Activated CD8-positive, alpha-beta T cell treated with anti-CD3 and anti-CD28 coated beads for 36 hours (primary cell): ENCODE measurements at regions of chr15 and their contacts with region 1.

Region 1: DNA sequence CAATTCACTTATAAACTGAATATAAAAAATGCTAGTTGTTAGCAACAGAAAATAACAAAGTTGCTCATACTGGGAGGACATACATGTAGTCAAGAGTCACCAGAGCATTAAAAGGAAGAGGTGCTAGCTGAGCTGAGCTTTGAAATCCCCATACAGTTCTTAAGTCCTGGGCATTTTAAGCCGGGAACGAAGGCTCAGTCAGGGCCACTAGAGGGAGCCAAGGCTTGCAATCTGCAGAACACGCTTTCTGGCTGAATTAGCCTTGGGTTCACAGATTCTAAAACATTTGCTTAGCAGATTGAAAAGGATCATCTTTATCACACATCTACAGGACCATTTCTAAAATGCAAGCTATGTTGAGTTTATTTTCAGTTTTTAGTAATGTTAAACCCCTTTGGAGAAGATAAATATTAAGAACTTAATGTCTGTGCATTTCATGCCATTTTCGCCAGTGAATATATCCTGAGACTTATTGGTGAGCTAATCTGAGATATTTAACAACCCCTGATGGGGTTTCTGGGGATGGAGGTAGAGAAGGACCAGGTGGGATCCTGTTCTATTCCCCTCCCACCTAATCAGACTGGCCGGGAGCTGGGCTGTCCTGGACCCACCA is 26.3 kb upstream of the MNS1 start:
- DNase-seq: peak; percentile 78
- ATAC-seq: peak; percentile 42
- H3K4me3 Mint-ChIP-seq: no peak overlapping the region
- H3K27ac Mint-ChIP-seq: no peak overlapping the region
- H3K4me1 Mint-ChIP-seq: no peaks in the 10 kb centered on the region
- H3K27me3 Mint-ChIP-seq: no peaks in the 10 kb centered on the region
- CTCF ChIP-seq: peak; percentile 63

Region 2: DNA sequence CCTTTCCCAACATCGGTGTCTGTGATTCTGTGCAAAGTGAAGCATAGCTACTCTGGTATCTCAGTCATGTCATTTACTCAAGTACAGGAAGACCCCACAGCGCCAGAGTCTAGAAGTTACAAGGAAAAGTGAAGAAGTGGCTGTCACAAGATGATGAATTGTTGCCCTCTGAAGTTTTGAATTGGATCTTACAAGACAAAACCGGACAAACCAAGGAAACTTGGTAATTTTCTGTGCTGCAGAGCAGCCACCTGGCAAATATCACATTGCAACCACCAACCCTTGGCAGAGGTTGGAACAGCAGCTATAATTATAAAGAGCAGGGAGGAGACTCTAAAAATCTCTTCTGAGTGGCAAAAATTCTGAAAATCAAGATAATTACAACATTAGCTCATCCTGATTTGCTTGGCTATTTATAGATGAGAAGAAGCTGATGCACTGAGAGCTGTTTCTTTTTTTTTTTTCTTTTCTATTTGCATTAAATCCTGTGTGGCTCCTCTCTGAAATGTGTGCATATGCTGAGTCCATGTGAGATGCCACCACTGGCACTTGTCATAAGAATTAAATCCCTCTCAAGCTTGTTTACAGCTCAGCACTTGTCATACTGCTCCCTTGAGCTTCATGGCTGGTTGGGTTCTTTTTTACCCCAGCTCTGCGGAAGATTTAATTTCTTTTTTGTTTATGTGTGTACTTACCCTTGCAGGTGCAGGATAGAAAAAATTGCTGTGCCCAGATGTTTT is 41.7 kb after region 1 on chr15:
- CTCF ChIA-PET with region 1: interaction called, 13 read pairs
- POLR2A ChIA-PET with region 1: no interaction called
- intact Hi-C with region 1: no loop called
- DNase-seq: no peak
- ATAC-seq: no peak
- H3K4me3 Mint-ChIP-seq: no peak overlapping the region
- H3K27ac Mint-ChIP-seq: no peak overlapping the region
- H3K4me1 Mint-ChIP-seq: peaks cover 6% of the 10 kb centered on the region
- H3K27me3 Mint-ChIP-seq: no peaks in the 10 kb centered on the region
- CTCF ChIP-seq: no peak

Region 3: GRCh38 chr15:56821721-56822425 is 330.7 kb after region 1 on chr15:
- CTCF ChIA-PET with region 1: interaction called, 10 read pairs
- POLR2A ChIA-PET with region 1: no interaction called
- intact Hi-C with region 1: no loop called
- DNase-seq: peak; percentile 55
- ATAC-seq: peak; percentile 60
- H3K4me3 Mint-ChIP-seq: no peak overlapping the region
- H3K27ac Mint-ChIP-seq: no peak overlapping the region
- H3K4me1 Mint-ChIP-seq: no peaks in the 10 kb centered on the region
- H3K27me3 Mint-ChIP-seq: no peaks in the 10 kb centered on the region
- CTCF ChIP-seq: peak; percentile 66

Region 4: DNA sequence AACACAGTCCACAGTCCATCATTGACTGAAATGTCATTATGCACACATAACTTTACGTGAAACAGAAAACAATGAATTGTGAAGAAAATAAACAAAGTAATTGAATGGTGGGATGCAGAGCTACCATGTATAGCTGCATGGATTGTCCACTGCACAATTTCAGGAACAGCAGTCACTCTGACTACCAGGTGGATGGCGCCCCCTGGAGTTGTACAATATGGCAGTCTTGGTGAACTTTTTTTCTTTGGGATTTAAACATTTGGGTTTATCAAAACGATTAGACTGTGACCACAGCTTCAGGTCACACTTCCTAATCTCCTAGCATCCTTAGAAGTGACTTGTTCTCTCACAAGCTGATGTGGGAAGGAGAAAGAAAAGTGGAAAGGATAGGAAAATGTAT is 378.4 kb after region 1 on chr15:
- CTCF ChIA-PET with region 1: interaction called, 46 read pairs
- POLR2A ChIA-PET with region 1: no interaction called
- intact Hi-C with region 1: loop called (anchors 2 kb)
- DNase-seq: peak; percentile 72
- ATAC-seq: no peak
- H3K4me3 Mint-ChIP-seq: no peak overlapping the region
- H3K27ac Mint-ChIP-seq: no peak overlapping the region
- H3K4me1 Mint-ChIP-seq: no peaks in the 10 kb centered on the region
- H3K27me3 Mint-ChIP-seq: no peaks in the 10 kb centered on the region
- CTCF ChIP-seq: peak; percentile 62

Region 5: DNA sequence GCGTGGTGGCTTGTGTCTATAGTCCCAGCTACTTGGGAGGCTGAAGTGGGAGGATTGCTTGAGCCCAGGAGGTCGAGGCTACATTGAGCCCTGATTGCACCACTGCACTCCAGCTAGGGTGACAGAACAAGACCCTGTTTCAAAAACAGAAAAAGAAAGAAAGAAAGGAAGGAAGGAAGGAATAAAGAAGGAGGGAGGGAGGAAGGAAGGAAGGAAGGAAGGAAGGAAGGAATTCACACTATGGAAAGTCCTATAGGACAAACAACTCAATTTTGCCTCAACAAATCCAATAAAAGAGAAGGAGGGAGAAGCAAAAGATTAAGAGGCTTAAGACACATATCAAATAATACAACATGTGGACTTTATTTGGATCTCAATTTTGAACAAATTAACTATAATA is 410.7 kb after region 1 on chr15:
- CTCF ChIA-PET with region 1: no interaction called
- POLR2A ChIA-PET with region 1: no interaction called
- intact Hi-C with region 1: no loop called
- DNase-seq: no peak
- ATAC-seq: no peak
- H3K4me3 Mint-ChIP-seq: no peak overlapping the region
- H3K27ac Mint-ChIP-seq: no peak overlapping the region
- H3K4me1 Mint-ChIP-seq: peaks cover 7% of the 10 kb centered on the region
- H3K27me3 Mint-ChIP-seq: no peaks in the 10 kb centered on the region
- CTCF ChIP-seq: no peak

Region 6: GRCh38 chr15:57306161-57306943 is 815.1 kb after region 1 on chr15:
- CTCF ChIA-PET with region 1: interaction called, 15 read pairs
- POLR2A ChIA-PET with region 1: no interaction called
- intact Hi-C with region 1: loop called (anchors 10 kb)
- DNase-seq: peak; percentile 89
- ATAC-seq: peak; percentile 93
- H3K4me3 Mint-ChIP-seq: peak overlapping the region; percentile 59
- H3K27ac Mint-ChIP-seq: no peak overlapping the region
- H3K4me1 Mint-ChIP-seq: no peaks in the 10 kb centered on the region
- H3K27me3 Mint-ChIP-seq: peaks cover 14% of the 10 kb centered on the region
- CTCF ChIP-seq: peak; percentile 89